ENCODE measurements at regions of chr11 and their contacts with region 1.

Region 1: GRCh38 chr11:115961159-115962003 is 457.2 kb upstream of the CADM1 start:
- DNase-seq: no peak
- ATAC-seq: no peak
- H3K4me3 ChIP-seq: no peak overlapping the region
- H3K27ac ChIP-seq: no peak overlapping the region
- H3K4me1 ChIP-seq: no peaks in the 10 kb centered on the region
- H3K27me3 ChIP-seq: no peaks in the 10 kb centered on the region
- CTCF ChIP-seq: no peak
- EP300 ChIP-seq: no peak
- POLR2A ChIP-seq: no peak
- RAD21 ChIP-seq: no peak

Region 2: DNA sequence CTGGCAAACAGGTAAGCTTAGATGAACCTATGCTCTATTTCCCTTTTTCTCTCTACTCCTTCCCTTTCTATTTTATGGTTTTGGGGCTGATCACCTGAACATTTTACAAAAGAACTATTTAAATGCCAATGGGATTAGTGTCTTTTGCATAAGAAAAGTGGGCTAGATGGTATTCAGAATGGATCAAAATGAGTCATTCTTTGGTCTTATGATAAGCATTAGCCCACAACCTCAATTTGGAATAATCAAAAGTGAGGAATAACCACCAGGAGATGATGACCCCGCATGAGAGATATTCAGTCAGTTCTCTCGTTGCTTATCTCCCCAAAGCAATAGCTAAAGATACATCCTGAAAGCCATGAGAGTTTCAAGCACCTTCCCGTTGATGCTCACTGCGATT is 58.2 kb before region 1 on chr11:
- CTCF ChIA-PET with region 1: no interaction called
- POLR2A ChIA-PET with region 1: no interaction called
- RAD21 ChIA-PET with region 1: no interaction called
- SMC1A ChIA-PET with region 1: no interaction called
- in situ Hi-C with region 1: no loop called
- intact Hi-C with region 1: no loop called
- DNase-seq: no peak
- ATAC-seq: no peak
- H3K4me3 ChIP-seq: no peak overlapping the region
- H3K27ac ChIP-seq: no peak overlapping the region
- H3K4me1 ChIP-seq: no peaks in the 10 kb centered on the region
- H3K27me3 ChIP-seq: no peaks in the 10 kb centered on the region
- CTCF ChIP-seq: no peak
- EP300 ChIP-seq: no peak
- POLR2A ChIP-seq: no peak
- RAD21 ChIP-seq: no peak

Region 3: GRCh38 chr11:115950660-115951059 is 10.7 kb before region 1 on chr11:
- CTCF ChIA-PET with region 1: interaction called, 5 read pairs
- POLR2A ChIA-PET with region 1: no interaction called
- RAD21 ChIA-PET with region 1: no interaction called
- SMC1A ChIA-PET with region 1: interaction called, 11 read pairs
- in situ Hi-C with region 1: no loop called
- intact Hi-C with region 1: no loop called
- DNase-seq: no peak
- ATAC-seq: no peak
- H3K4me3 ChIP-seq: no peak overlapping the region
- H3K27ac ChIP-seq: no peak overlapping the region
- H3K4me1 ChIP-seq: no peaks in the 10 kb centered on the region
- H3K27me3 ChIP-seq: no peaks in the 10 kb centered on the region
- CTCF ChIP-seq: no peak
- EP300 ChIP-seq: no peak
- POLR2A ChIP-seq: no peak
- RAD21 ChIP-seq: no peak

Region 4: DNA sequence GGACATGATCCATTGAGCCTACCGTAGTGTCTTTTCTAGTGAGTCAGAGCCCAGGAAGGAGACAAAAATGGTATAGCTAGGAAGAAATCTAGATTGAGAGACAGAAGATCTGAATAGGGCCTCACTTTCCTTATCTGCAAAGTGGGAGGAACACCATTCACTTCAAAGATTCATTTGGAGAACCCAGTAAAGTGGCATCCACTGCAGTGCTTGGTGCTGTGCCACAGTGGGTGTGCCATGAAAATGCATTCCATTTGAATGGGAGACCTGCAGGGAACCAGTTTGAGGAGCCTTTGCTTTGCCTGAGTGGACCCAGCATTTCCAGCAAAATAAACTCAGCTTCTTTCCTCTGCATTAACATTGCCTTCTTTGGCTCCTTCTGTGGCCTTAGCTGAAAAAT is 13.3 kb after region 1 on chr11:
- CTCF ChIA-PET with region 1: interaction called, 5 read pairs
- POLR2A ChIA-PET with region 1: no interaction called
- RAD21 ChIA-PET with region 1: no interaction called
- SMC1A ChIA-PET with region 1: interaction called, 10 read pairs
- in situ Hi-C with region 1: no loop called
- intact Hi-C with region 1: no loop called
- DNase-seq: no peak
- ATAC-seq: peak; percentile 12
- H3K4me3 ChIP-seq: 0 out of 2 replicates have a peak overlapping the region, but pooled peaks have one; percentile 65
- H3K27ac ChIP-seq: no peak overlapping the region
- H3K4me1 ChIP-seq: peaks cover 4% of the 10 kb centered on the region; the same call in 1 of the 2 replicates
- H3K27me3 ChIP-seq: no peaks in the 10 kb centered on the region
- CTCF ChIP-seq: no peak
- EP300 ChIP-seq: no peak
- POLR2A ChIP-seq: no peak
- RAD21 ChIP-seq: no peak